K562 (cell line): ENCODE measurements at regions of chr4 and their contacts with region 1.

Region 1: DNA sequence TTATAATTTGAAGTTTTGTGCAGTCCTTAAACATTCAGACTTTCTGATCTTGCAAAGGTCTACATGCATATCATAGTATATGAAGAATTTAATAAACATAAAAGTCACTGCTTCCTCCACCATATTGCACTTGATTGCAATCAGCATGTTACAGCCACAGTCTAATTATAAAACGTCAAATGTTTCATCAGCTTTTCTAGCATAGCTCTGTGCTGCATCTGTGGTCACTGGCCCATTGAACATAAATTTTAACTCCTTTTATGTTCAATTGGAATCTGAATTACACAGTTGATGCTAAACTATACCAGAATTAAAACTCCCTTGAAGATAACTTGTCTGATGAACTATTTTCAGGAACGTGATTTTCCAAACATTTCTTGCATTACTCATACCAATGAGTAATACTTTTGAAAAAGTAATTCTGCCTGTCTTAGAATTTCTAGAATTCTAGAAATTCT is 329.1 kb downstream of the GALNTL6 start:
- DNase-seq: no peak
- ATAC-seq: peak; percentile 72
- H3K4me3 ChIP-seq: no peak overlapping the region
- H3K27ac ChIP-seq: no peak overlapping the region
- H3K4me1 ChIP-seq: peaks cover 0 to 3% of the 10 kb centered on the region in 2 experiments; a peak in 2 of 5 replicates
- H3K27me3 ChIP-seq: no peaks in the 10 kb centered on the region
- CTCF ChIP-seq: no peak
- EP300 ChIP-seq: no peak
- POLR2A ChIP-seq: no peak
- RAD21 ChIP-seq: no peak

Region 2: DNA sequence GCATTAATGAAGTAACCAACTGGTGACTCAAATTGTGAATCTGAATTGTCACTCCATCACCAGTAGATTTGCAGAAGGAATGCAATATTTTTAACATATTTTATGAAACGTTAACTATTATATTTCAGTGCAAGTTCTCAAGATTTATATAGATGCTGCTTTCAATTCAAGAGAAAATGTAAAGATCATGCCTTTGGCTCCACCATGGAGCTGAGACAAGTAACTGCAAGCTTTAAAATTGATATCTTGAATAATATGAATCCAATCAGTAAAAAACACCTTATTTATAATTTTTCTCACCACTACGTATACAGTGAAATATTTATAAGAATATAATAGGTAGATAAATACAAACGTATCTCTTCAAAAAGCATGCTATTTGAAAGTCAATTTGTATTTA is 356.9 kb before region 1 on chr4:
- CTCF ChIA-PET with region 1: no interaction called
- POLR2A ChIA-PET with region 1: no interaction called
- in situ Hi-C with region 1: no loop called
- intact Hi-C with region 1: no loop called
- DNase-seq: no peak
- ATAC-seq: no peak
- H3K4me3 ChIP-seq: no peak overlapping the region
- H3K27ac ChIP-seq: no peak overlapping the region
- H3K4me1 ChIP-seq: no peaks in the 10 kb centered on the region
- H3K27me3 ChIP-seq: no peaks in the 10 kb centered on the region
- CTCF ChIP-seq: no peak
- EP300 ChIP-seq: no peak
- POLR2A ChIP-seq: no peak
- RAD21 ChIP-seq: no peak

Region 3: GRCh38 chr4:172050911-172051310 is 91.4 kb before region 1 on chr4:
- CTCF ChIA-PET with region 1: no interaction called
- POLR2A ChIA-PET with region 1: no interaction called
- in situ Hi-C with region 1: no loop called
- intact Hi-C with region 1: loop called (anchors 5 kb)
- DNase-seq: no peak
- ATAC-seq: peak; percentile 47
- H3K4me3 ChIP-seq: no peak overlapping the region
- H3K27ac ChIP-seq: no peak overlapping the region
- H3K4me1 ChIP-seq: no peaks in the 10 kb centered on the region
- H3K27me3 ChIP-seq: no peaks in the 10 kb centered on the region
- CTCF ChIP-seq: no peak
- EP300 ChIP-seq: no peak
- POLR2A ChIP-seq: no peak
- RAD21 ChIP-seq: no peak

Region 4: GRCh38 chr4:172096786-172097185 is 45.5 kb before region 1 on chr4:
- CTCF ChIA-PET with region 1: no interaction called
- POLR2A ChIA-PET with region 1: no interaction called
- in situ Hi-C with region 1: no loop called
- intact Hi-C with region 1: loop called (anchors 5 kb)
- DNase-seq: no peak
- ATAC-seq: no peak
- H3K4me3 ChIP-seq: no peak overlapping the region
- H3K27ac ChIP-seq: no peak overlapping the region
- H3K4me1 ChIP-seq: no peaks in the 10 kb centered on the region
- H3K27me3 ChIP-seq: no peaks in the 10 kb centered on the region
- CTCF ChIP-seq: no peak
- EP300 ChIP-seq: no peak
- POLR2A ChIP-seq: no peak
- RAD21 ChIP-seq: no peak

Region 5: DNA sequence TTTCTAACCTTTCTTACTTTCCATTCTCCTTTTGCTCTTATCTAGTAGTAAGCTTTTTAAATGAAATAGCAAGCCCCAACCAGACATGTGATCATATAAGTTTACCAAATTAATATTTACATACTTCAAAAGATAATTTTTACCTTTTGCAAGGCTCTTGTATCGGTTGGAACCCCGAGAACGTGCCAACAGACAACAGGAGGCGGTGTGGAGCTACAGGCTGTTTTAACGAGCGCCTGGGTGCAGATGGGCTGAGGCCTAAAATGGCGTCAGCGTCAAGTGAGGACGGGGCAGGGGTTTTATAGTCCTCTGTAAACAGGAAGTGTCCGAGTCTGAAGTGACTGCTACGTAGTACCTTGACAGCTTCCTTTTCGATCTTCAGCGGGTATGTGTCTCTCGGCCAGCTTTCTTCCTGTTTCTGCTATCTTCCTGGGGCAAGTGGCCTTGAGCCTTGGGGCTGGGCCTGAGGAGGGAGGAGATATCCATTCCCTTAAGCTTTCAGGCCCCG is 13.6 kb after region 1 on chr4:
- CTCF ChIA-PET with region 1: no interaction called
- POLR2A ChIA-PET with region 1: interaction called, 16 read pairs
- in situ Hi-C with region 1: no loop called
- intact Hi-C with region 1: no loop called
- DNase-seq: peak; percentile 34 to 93 (median 57)
- ATAC-seq: peak; percentile 91
- H3K4me3 ChIP-seq: peak overlapping the region; percentile 41
- H3K27ac ChIP-seq: peak overlapping the region; percentile 79
- H3K4me1 ChIP-seq: peaks cover 0 to 5% of the 10 kb centered on the region in 2 experiments; a peak in 3 of 5 replicates
- H3K27me3 ChIP-seq: no peaks in the 10 kb centered on the region
- CTCF ChIP-seq: peak; percentile 57 to 70 (median 57)
- EP300 ChIP-seq: peak; percentile 33; the same call in 1 of the 2 replicates
- POLR2A ChIP-seq: peak; percentile 89
- RAD21 ChIP-seq: peak; percentile 40 to 42; a peak in 3 of 4 replicates